B cell (primary cell): ENCODE measurements at regions of chr22 and their contacts with region 1.

Region 1: GRCh38 chr22:47050401-47051051 is 288.1 kb downstream of the TBC1D22A start:
- DNase-seq: no peak
- ATAC-seq: no peak
- H3K4me3 ChIP-seq: no peak overlapping the region
- H3K4me3 Mint-ChIP-seq: no peak overlapping the region
- H3K27ac ChIP-seq: no peak overlapping the region
- H3K27ac Mint-ChIP-seq: no peak overlapping the region
- H3K4me1 ChIP-seq: peaks cover 0 to 12% of the 10 kb centered on the region in 2 donors
- H3K4me1 Mint-ChIP-seq: peaks cover 26% of the 10 kb centered on the region
- H3K27me3 ChIP-seq: no peaks in the 10 kb centered on the region
- H3K27me3 Mint-ChIP-seq: no peaks in the 10 kb centered on the region
- CTCF ChIP-seq: no peak

Region 2: DNA sequence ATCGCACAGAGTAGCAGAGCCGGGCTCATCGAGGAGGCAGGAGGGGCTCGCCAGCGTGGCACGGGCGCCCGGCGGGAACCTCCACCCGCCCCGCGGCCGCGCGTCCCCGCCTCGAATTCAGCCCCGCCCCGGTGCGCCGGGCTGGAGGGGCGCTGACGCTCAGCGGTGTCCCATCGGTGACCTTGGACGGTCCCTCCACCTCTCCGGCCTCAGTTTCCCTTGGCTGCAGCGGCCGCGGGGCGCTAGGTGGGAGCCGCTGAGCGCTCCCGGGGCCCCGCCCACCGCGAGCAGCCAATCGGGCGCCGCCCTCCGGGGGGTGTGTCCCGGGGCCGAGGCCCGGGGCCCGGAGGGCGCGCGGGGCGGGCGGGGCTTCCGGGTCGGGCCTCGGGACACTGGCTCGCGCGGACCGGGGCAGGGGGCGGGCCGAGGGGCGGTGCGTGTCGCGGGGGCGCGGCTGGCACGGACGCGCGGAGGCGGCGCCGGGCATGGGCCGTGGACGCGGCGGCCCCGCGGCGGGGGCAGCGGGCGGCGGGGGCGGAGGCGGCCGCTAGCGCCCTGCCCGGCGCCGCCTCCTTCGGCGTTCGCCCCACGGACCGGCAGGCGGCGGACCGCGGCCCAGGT is 900.4 kb before region 1 on chr22 and contains the start of gene PPARA:
- CTCF ChIA-PET with region 1: no interaction called
- POLR2A ChIA-PET with region 1: interaction called, 14 read pairs
- intact Hi-C with region 1: no loop called
- DNase-seq: peak; percentile 89
- ATAC-seq: peak; percentile 84
- H3K4me3 ChIP-seq: peak within 1 kb of the TSS; percentile 53 to 88 (median 72)
- H3K4me3 Mint-ChIP-seq: peak within 1 kb of the TSS; percentile 88
- H3K27ac ChIP-seq: peak within 1 kb of the TSS; percentile 60 to 69
- H3K27ac Mint-ChIP-seq: peak within 1 kb of the TSS; percentile 84
- H3K4me1 ChIP-seq: peaks cover 12 to 23% of the 10 kb centered on the region in 2 donors
- H3K4me1 Mint-ChIP-seq: peaks cover 21% of the 10 kb centered on the region
- H3K27me3 ChIP-seq: no peaks in the 10 kb centered on the region
- H3K27me3 Mint-ChIP-seq: no peaks in the 10 kb centered on the region
- CTCF ChIP-seq: no peak
- total RNA-seq, gene PPARA: 28.3 and 29.8 TPM in 2 replicates

Region 3: GRCh38 chr22:47011131-47011858 is 39.2 kb before region 1 on chr22:
- CTCF ChIA-PET with region 1: no interaction called
- POLR2A ChIA-PET with region 1: no interaction called
- intact Hi-C with region 1: no loop called
- DNase-seq: no peak
- ATAC-seq: no peak
- H3K4me3 ChIP-seq: no peak overlapping the region
- H3K4me3 Mint-ChIP-seq: no peak overlapping the region
- H3K27ac ChIP-seq: no peak overlapping the region
- H3K27ac Mint-ChIP-seq: peak overlapping the region; percentile 26
- H3K4me1 ChIP-seq: no peaks in the 10 kb centered on the region
- H3K4me1 Mint-ChIP-seq: peaks cover 14% of the 10 kb centered on the region
- H3K27me3 ChIP-seq: no peaks in the 10 kb centered on the region
- H3K27me3 Mint-ChIP-seq: no peaks in the 10 kb centered on the region
- CTCF ChIP-seq: no peak